Dorsolateral prefrontal cortex (tissue), 120 donors: ENCODE measurements at regions of chr9 and their contacts with region 1.

Region 1: DNA sequence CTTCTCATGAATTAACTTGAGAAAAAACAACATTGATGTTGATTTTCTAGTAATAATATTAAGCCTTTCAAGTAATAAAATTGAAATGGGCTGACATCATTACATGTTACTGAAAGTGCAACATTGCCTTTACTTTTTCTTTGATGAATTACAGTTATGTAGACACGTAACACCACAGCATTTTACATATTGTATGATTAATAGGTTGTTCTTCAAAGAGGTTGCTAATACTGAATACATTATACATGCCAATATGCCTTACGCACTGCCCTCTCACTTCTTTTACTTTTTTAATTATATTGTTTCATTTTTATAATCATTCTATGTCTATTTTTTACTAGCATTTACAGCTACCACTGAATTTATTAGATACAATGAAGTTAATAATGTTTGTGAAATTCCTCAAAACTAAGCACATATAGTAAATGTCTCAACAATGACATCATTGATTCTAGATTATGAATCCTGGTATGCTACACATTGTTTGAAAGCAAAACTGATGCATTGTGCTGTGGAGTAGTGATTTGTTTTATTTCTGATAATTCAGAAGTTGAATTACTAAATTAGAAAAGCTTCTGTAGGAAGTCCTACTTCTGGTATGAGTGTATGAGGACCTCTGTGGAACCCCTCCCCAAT is 464.4 kb upstream of the IZUMO3 start:
- DNase-seq: no peak
- H3K4me3 ChIP-seq: no peak overlapping the region
- H3K27ac ChIP-seq: no peak overlapping the region
- H3K27me3 ChIP-seq: no peaks in the 10 kb centered on the region
- CTCF ChIP-seq: no peak

Region 2: GRCh38 chr9:26261503-26262330 is 1251.6 kb after region 1 on chr9:
- intact Hi-C with region 1: loop called in 1 of 2 experiments (anchors 10 kb)
- DNase-seq: no peak
- H3K4me3 ChIP-seq: no peak overlapping the region
- H3K27ac ChIP-seq: no peak overlapping the region
- H3K27me3 ChIP-seq: no peaks in the 10 kb centered on the region
- CTCF ChIP-seq: no peak